ENCODE measurements at regions of chr1 and their contacts with region 1.

Region 1: DNA sequence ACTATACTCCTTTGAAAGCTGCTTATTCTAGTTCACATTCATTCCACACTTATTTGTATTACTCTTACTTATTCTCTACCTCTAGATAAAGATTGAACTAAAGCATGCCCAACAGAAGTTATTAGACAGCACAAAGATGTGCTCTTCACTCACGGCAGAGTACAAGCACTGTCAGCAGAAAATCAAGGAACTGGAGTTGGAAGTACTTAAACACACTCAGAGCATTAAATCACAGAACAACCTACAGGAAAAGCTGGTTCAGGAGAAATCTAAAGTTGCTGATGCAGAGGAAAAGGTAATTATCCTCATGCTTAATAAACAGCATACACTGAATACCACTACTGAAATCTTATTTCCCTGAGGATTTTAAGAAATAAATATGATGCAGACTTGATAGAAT is 81.3 kb upstream of the PPIH start:
- DNase-seq: no peak
- H3K4me3 ChIP-seq: no peak overlapping the region
- H3K27ac ChIP-seq: no peak overlapping the region
- H3K4me1 ChIP-seq: no peaks in the 10 kb centered on the region
- H3K27me3 ChIP-seq: no peaks in the 10 kb centered on the region
- CTCF ChIP-seq: no peak
- POLR2A ChIP-seq: no peak

Region 2: GRCh38 chr1:42747125-42747524 is 170.2 kb after region 1 on chr1:
- intact Hi-C with region 1: loop called (anchors 5 to 10 kb)
- DNase-seq: peak in 3 of 7 donors; percentile 35 to 54 (median 44)
- H3K4me3 ChIP-seq: no peak overlapping the region
- H3K27ac ChIP-seq: peak overlapping the region in 1 of 5 donors; percentile 80
- H3K4me1 ChIP-seq: peaks cover 9 to 15% of the 10 kb centered on the region in 2 donors
- H3K27me3 ChIP-seq: no peaks in the 10 kb centered on the region
- CTCF ChIP-seq: peak; percentile 19 to 64 (median 50)
- POLR2A ChIP-seq: no peak